ENCODE measurements at regions of chr6 and their contacts with region 1.

Region 1: DNA sequence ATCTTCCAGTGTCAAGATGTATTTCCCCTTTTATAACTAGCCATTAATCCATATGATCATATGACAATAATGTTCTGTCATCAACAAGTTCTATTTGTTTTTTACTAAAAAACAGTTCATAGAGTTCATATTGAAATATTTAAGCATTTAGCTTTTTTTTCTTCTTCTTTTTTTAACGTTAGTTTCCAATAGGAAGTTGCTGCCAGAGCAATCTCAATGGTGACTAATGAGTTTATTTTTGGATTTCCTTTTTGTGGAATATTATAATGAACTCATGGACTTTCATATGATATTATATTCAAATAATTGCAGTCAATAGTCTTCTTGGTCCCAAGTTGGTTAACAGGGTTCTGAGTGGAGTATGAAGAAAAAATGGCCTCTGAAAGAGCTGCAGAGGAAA is 343.3 kb downstream of the BCKDHB start:
- DNase-seq: no peak
- ATAC-seq: no peak
- H3K4me3 ChIP-seq: no peak overlapping the region
- H3K27ac ChIP-seq: no peak overlapping the region
- H3K4me1 ChIP-seq: peaks cover 17% of the 10 kb centered on the region
- H3K27me3 ChIP-seq: no peaks in the 10 kb centered on the region
- CTCF ChIP-seq: no peak

Region 2: DNA sequence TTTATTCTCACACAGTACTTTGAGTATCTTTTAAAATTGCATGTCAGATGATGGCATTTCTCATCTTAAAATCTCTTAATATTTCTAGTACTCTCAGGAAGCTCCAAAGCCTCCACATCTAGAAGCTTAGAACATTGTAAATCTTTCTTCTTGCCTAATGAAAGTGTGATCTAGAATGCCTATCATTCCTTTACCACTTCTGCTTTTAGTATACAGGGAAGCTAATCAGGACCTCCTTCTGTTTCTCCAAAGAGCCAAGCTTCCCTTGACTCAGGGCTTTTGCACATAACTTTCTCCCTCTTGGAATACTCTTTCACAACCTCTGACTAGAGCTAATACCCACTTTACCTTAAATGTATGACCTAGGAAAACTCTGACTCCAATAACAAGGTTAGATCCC is 494.9 kb before region 1 on chr6:
- CTCF ChIA-PET with region 1: interaction called, 12 read pairs
- POLR2A ChIA-PET with region 1: no interaction called
- intact Hi-C with region 1: no loop called
- DNase-seq: no peak
- ATAC-seq: no peak
- H3K4me3 ChIP-seq: no peak overlapping the region
- H3K27ac ChIP-seq: no peak overlapping the region
- H3K4me1 ChIP-seq: no peaks in the 10 kb centered on the region
- H3K27me3 ChIP-seq: no peaks in the 10 kb centered on the region
- CTCF ChIP-seq: no peak

Region 3: DNA sequence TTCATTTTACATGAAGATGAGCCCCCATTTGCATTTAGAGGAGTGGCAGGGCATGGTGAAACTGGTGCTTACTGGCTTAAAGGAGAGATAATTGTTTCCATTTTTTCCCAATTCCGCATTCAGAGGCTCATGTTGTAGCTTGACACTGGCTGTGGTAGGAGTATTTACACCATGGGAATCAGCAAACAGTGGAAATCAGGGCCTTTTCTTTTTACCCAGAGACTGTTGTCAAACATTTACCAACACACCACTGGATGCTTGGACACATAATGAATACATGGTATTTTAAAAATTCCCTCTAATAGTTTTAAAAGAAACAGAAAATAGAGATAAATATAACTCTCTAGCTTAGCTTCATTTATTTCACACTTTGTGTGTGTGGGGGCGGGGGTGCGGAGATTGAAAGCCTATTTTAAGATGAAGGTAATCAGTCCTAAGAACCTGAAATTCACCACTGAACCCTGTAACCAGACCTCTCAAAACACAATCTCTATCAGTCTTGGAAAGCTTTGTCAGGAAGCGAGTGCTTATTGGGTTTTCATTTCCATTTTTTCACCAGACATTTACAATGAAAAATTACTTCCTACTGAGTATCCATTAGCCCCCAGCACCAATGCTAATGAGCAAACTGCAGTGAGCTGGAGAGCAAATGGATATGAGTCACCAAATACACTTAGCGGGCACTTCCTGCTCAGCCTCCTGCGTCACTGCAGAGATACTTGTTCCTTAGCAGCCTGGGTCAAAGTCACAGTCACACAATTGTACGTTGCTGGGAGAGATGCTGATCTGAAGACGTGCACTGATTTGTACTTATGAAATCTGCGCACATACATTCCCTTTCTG is 188.7 kb after region 1 on chr6:
- CTCF ChIA-PET with region 1: no interaction called
- POLR2A ChIA-PET with region 1: no interaction called
- intact Hi-C with region 1: no loop called
- DNase-seq: peak; percentile 82
- ATAC-seq: peak; percentile 98
- H3K4me3 ChIP-seq: 0 out of 2 replicates have a peak overlapping the region, but pooled peaks have one; percentile 13
- H3K27ac ChIP-seq: peak overlapping the region; percentile 91
- H3K4me1 ChIP-seq: peaks cover 24% of the 10 kb centered on the region
- H3K27me3 ChIP-seq: no peaks in the 10 kb centered on the region
- CTCF ChIP-seq: no peak